Posterior vena cava (tissue), 2 donors: ENCODE measurements at regions of chr2 and their contacts with region 1.

Region 1: DNA sequence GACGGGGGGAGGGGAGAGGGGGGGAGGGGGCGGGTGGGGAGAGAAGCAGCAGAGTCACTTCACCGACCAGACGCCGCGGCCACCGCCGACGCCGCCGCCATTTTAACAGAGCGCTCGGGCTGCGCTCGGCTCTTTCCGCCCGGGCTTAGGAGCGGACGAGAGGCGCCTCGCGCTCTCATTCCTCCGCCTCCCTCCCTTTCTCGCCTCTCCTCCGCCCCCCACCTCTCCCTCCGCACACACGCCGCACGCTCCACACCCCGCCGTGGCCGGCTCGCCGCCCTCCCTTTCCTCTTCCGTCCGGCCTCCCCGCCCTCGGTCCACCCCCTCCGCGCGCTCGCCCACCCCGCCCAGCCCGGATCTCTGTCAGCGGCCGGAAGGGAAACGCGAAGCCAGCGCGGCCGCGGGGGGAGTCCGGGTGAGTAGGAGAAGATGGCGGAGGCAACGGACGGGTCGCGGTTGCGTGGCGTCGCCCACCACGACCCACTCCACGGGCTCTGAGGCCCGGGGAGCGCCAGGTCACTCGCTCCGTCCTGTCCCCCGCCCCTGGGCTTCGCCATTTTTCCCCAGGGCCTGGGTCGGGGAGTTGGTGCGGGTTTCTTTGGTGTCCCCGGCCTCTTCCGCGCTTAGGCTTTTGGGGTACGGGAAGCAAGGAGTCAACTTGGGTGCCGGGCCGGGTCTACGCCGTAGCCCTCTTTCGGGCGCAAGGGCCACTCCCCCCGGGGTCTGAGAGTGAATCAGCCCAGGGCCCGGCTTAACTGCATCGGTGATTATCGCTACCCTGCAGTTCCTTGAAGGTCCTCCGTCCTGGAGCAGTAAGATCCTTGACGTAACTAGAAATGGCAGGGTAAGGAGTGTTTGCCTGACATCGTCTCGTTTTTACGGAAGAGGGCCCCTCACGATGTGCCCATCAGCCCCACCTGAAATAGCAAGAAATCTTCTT is at the start of gene USP34:
- DNase-seq: peak; percentile 99
- total RNA-seq, gene USP34: 87.4 to 125 TPM

Region 2: DNA sequence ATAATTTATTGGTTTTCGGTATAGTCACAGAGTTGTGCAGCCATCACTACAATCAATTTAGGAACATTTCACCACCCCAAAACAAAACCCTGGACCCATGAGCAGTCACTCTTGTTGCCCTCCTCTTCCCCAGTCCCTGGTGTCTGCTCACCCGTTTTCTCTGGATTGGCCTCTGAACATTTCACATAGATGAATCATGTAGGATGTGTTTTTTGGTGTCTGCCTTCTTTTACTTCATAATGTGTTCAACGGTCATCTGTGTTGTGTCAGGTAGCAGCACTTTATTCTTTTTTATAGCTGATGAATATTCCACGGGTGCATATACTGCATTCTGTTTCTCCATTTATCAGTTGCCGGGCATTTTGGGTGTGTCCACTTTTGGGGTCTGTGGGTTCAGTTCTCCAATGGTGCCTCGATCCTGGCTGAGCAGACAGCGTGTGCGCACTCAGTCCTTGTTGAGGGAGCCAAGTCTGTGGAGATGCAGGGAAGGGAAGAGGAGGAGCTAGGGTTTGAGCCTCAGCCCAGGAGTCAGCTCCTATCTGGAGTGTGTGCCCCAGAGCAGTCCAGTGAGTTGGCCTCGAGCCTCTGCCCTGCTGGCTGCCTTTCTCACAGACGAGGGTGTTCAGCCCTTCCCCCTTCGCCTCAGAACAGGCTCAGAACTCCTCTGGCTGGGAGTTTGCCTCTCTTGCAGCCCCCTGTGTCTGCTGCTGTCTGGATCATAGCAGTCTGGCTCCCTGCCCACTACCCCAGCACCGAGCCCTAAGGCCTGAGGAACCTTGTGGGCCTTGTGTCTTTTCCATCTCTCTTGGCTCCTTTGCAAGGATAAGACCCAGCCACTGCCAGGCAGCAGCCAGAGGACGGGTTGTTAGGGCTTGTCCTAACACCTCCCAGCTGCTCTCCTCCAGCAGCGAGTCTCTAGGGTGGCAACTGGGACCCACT is 291.3 kb before region 1 on chr2:
- intact Hi-C with region 1: loop called in 1 of 2 experiments (anchors 10 kb)
- DNase-seq: peak; percentile 91